Vagina (tissue), 2 donors: ENCODE measurements at regions of chr5 and their contacts with region 1.

Region 1: DNA sequence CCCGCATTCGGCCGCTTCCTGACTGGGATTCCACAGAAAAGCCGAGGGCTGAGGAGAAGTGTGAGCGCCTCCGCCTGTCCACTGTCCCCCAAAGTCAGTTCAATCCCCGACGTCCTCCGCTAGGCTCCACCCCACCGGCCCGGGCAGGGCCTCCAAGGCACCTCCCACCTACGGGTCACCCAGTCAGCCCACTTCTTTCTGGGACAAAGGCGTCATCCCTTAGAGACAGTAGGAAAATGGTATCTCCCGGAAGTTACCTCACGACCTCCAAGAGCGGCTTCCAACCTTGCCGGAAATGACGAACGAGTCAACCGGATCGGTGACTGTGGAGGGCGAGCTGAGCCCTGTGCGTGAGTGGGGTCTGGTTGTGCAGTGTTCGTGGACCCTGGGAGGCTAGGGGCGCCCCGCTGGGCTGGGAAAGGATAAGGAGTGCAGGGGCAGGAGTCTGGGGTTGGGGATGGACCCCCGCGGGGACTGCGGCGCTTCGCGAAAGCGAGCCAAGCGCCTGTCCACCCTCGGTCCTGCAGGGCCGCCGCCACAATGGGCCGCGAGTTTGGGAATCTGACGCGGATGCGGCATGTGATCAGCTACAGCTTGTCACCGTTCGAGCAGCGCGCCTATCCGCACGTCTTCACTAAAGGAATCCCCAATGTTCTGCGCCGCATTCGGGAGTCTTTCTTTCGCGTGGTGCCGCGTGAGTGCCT is at the starts of genes GDF9 and UQCRQ:
- DNase-seq: peak; percentile 98 to 99
- H3K4me3 ChIP-seq: peak within 1 kb of the TSS; percentile 82 to 86
- H3K27ac ChIP-seq: peak within 1 kb of the TSS; percentile 99
- H3K4me1 ChIP-seq: peaks cover 24% of the 10 kb centered on the region
- H3K27me3 ChIP-seq: no peaks in the 10 kb centered on the region
- CTCF ChIP-seq: no peak
- POLR2A ChIP-seq: peak; percentile 45 to 49
- total RNA-seq, gene GDF9: not detected
- total RNA-seq, gene UQCRQ: 189 TPM

Region 2: DNA sequence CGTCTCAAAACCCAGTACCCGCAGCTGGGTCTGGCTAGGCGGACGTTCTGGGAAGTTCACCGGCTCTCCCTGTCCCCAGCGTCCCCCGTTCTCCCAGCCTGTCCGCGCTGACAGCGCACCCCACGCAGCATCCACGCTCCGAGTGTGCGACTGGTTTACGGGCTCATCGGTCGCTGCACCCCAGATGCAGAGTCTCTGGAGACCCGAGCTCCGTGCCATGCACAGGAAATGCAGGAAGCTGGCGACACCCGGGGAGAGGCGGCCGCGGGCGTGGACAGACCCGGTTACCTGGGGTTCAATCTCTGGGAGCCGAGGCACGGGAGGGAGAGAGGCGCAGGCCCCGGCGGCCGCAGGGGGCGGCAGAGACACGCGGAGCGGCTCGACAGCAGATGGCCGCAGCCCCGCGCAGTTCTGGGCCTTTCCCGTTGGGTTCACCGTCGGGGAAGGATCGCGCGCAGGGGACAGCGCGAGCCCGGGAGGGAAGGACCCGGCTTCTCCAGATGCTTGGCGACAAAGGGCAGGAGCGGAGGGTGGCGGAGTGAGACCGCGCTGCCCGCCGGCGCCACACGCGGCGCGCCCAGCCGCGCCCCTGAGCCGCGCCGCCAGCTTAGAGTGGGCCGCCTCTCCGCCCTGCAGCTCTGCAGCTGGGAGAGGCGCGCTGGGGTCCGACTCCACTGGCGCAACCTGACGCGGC is 36.6 kb before region 1 on chr5:
- intact Hi-C with region 1: loop called (anchors 5 kb)
- DNase-seq: no peak
- H3K4me3 ChIP-seq: peak overlapping the region; percentile 59 to 70
- H3K27ac ChIP-seq: peak overlapping the region; percentile 79
- H3K4me1 ChIP-seq: peaks cover 15% of the 10 kb centered on the region
- H3K27me3 ChIP-seq: no peaks in the 10 kb centered on the region
- CTCF ChIP-seq: peak; percentile 27 to 76 (median 74)
- POLR2A ChIP-seq: no peak

Region 3: GRCh38 chr5:132901730-132902129 is 35.2 kb after region 1 on chr5:
- intact Hi-C with region 1: no loop called
- DNase-seq: no peak
- H3K4me3 ChIP-seq: no peak overlapping the region
- H3K27ac ChIP-seq: no peak overlapping the region
- H3K4me1 ChIP-seq: peaks cover 4% of the 10 kb centered on the region
- H3K27me3 ChIP-seq: no peaks in the 10 kb centered on the region
- CTCF ChIP-seq: no peak
- POLR2A ChIP-seq: no peak